GM10248 (cell line): ENCODE measurements at regions of chr5 and their contacts with region 1.

Region 1: DNA sequence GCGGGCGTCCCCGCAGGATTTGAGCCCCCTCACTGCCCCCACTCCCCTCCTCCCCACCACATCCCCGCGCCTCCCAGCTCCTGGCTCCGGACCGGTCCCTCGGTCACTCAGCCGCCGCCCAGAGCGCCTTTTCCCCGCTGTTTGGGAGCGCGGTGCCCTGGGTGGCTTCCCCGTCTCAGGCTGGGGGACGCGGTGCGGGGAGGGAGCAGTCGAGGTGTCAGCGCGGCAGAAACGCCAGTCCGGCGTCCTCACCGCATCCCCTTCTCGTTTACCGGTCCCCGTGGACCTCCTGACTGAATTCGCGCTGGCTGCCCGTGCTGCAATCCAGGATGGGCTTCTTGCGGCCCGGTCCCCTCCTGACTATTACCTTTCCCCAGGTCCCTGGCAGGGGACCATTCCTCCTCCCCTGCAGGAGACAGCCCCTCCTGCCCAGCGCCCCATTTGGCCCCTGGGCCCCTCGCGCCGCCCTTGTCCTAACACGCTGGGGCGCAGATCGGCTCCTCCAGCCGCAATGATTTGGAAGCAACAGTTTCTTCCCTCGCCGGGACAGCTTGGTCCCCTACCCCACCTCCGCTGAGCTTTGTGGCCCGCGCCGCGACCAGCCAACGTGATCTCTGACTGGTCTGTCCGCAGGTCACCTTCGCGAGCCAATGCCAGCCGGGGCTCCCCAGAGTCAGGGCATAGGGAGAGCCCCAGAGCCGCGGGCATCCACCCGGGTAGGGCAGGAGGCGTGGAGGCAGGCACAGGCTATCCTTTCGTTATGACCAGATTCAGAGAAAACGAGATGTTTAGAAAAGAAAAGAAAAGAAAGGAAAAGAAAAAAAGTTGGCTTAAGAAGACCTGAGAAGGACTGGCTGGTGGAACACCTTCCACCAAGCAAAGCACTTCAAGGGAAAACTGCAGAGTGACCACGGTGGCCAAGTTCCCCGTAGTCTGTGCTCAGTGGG is 1.2 kb downstream of the ANKRD33B start:
- DNase-seq: no peak
- CTCF ChIP-seq: no peak

Region 2: GRCh38 chr5:10577371-10578292 is 12.5 kb after region 1 on chr5:
- CTCF ChIA-PET with region 1: interaction called, 36 read pairs
- POLR2A ChIA-PET with region 1: interaction called, 7 read pairs
- DNase-seq: no peak
- CTCF ChIP-seq: no peak

Region 3: DNA sequence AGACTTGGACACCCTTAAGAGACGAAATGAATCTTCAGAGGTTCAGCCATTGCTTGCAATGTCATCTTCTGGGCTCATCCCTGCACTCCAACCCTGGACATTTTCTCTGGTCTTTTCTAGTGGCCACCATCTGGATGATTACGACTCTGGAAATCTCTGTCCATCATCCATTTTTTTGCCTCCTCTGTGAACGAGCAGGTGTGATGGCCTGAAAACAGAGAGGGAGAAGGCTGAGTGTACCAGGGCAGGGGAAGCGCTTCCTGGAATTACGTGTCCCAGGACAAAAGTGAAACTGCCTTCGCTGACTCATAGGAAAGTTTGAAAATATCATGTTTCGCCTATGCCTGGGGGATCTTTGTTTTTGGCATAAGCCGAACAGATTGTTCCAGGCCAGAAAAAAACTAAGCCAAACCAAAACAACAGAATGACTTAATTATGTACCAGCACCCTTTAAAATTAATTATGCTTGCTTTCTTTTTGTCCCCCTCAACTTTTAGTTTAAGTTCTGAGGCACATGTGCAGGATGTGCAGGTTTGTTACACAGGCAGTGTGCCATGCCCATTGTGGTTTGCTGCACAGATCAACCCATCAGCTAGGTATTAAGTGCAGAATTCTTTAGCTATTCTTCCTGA is 30.7 kb after region 1 on chr5:
- CTCF ChIA-PET with region 1: no interaction called
- POLR2A ChIA-PET with region 1: interaction called, 13 read pairs
- DNase-seq: no peak
- CTCF ChIP-seq: no peak